Esophagus squamous epithelium (tissue), 5 donors: ENCODE measurements at regions of chr19 and their contacts with region 1.

Region 1: DNA sequence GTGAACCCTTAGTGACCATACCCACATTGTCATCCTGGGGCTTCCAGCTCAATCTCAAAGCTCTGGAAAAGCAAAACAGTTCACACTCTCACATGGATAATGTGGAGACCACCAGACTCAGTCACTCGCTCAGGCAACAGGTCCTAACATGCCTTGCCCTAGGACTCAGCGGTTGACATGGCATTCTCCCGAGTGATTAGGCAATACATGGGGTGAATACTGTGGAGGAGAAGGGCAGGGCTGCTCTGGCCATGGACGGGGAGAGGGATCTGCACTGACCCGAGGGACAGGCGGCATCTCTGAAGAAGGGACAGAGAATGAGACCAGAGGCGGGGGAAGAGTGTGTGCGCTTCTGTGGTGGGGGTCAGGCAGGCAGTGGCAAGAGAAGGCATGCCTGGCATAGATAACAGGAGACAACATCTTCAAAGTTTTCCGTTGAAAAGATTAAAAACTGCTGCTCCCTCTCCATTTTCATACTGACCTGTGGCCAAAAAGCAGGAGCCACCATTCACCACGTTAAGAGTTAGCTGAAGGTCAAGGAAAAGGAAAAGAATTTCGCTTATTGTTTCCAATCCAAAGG is 44.5 kb upstream of the EPHX3 start:
- DNase-seq: no peak
- H3K4me3 ChIP-seq: no peak overlapping the region
- H3K27ac ChIP-seq: peak overlapping the region in 3 of 4 donors; percentile 18 to 40 (median 38)
- H3K4me1 ChIP-seq: peaks cover 51 to 96% (median 80%) of the 10 kb centered on the region in 3 donors
- H3K27me3 ChIP-seq: no peaks in the 10 kb centered on the region
- CTCF ChIP-seq: no peak
- POLR2A ChIP-seq: no peak

Region 2: GRCh38 chr19:15323496-15324227 is 46.9 kb after region 1 on chr19:
- intact Hi-C with region 1: loop called (anchors 10 kb)
- DNase-seq: no peak
- H3K4me3 ChIP-seq: peak overlapping the region in 1 of 4 donors; percentile 24
- H3K27ac ChIP-seq: peak overlapping the region; percentile 70 to 87 (median 79)
- H3K4me1 ChIP-seq: peaks cover 59 to 99% (median 87%) of the 10 kb centered on the region in 3 donors
- H3K27me3 ChIP-seq: no peaks in the 10 kb centered on the region
- CTCF ChIP-seq: no peak
- POLR2A ChIP-seq: no peak